Activated naive CD4-positive, alpha-beta T cell treated with anti-CD3 and anti-CD28 coated beads for 36 hours (primary cell): ENCODE measurements at regions of chr7 and their contacts with region 1.

Region 1: GRCh38 chr7:123557398-123558288 is at the start of gene NDUFA5:
- DNase-seq: peak; percentile 98
- H3K4me3 Mint-ChIP-seq: no peak within 1 kb of the TSS
- H3K27ac Mint-ChIP-seq: no peak within 1 kb of the TSS
- H3K4me1 Mint-ChIP-seq: peaks cover 18% of the 10 kb centered on the region
- H3K27me3 Mint-ChIP-seq: no peaks in the 10 kb centered on the region
- total RNA-seq, gene NDUFA5: 58.9 to 60.7 TPM

Region 2: DNA sequence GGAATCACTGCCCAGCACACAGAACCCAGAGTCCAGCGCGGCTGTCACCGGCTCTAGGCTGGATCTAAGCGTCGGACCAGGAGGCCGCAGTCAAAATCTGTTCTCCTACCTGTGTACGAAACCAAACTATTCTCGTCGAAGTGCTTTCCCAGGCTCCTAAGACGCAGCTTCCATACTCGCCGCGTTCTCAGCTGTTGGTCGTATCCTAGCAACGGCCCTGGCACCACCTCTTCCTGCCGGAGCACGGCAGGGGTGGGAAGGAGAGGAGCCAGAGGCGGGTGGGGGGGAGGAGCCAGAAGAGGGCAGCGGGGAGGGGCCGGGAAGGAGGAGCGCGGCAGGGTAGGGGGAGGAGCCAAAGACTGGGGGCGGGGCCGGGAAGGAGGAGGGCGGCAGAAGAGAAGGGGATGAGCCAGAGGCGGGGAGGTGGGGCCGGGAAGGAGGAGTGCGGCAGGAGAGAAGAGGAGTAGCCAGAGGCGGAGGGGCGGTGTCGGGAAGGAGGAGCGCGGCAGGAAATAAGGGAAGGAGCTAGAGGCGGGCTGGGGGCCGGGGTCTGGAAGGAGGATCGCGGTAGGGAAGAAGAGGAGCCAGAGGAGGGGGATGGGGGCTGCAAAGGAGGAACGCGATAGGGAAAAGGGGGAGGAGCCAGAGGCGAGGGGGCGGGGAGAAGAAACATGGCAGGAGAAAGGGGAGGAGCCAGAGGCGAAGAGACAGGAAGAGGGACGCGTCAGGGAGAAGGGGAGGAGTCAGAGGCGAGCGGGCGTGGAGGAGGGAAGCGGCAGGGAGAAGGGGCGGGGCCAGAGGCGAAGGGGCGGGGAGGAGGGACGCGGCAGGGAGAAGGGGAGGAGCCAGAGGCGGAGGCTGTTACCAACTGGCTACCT is 23.0 kb before region 1 on chr7 and contains the start of gene IQUB:
- CTCF ChIA-PET with region 1: interaction called, 3 read pairs
- intact Hi-C with region 1: loop called (anchors 1 kb)
- DNase-seq: peak; percentile 99
- H3K4me3 Mint-ChIP-seq: peak within 1 kb of the TSS; percentile 92
- H3K27ac Mint-ChIP-seq: peak within 1 kb of the TSS; percentile 82
- H3K4me1 Mint-ChIP-seq: peaks cover 27% of the 10 kb centered on the region
- H3K27me3 Mint-ChIP-seq: peaks cover 18% of the 10 kb centered on the region
- total RNA-seq, gene IQUB: 0.07 TPM in 1 of 2 experiments, not detected in the other

Region 3: GRCh38 chr7:123712619-123713018 is 155.0 kb after region 1 on chr7:
- CTCF ChIA-PET with region 1: interaction called, 3 read pairs
- intact Hi-C with region 1: loop called (anchors 5 kb)
- DNase-seq: no peak
- H3K4me3 Mint-ChIP-seq: no peak overlapping the region
- H3K27ac Mint-ChIP-seq: peak overlapping the region; percentile 14
- H3K4me1 Mint-ChIP-seq: peaks cover 52% of the 10 kb centered on the region
- H3K27me3 Mint-ChIP-seq: no peaks in the 10 kb centered on the region

Region 4: DNA sequence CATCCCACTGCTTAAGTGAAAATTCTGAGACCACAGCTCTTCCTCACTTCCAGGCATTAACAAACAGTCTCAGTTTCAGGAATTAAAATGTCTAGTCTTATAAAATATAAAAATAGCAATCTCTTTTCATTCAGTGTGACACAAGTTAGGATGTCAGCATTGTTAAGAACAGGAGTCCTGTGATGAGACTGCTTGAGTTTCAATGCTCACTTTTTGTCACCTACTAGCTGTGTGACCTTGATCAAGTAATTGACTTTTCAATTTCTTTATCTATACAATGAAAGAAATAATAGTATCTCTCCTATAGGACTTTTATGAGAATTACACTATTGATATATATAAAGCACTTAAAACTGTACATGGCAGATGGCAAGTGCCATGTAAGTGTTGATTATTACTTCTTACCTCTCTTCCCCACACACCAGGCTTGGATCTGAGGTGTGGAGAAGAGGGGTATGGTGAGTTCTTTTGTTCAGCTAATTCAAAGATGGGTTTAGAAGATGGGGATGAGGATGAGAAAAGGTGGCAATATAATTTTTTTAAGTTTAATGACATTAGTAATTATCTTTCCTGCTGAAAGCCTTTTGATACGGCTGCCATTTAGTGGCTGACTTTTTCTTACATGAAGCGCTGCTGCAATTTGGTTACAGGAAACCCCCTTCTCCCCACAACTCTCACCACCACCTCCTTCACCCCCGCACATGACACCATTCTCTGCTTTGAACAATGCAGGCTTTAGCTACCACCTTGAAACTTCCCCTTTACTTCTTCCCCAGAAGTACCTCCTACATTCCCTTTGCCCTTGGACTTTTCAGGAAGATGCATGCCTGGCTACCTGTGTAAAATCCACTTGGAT is 266.5 kb after region 1 on chr7:
- CTCF ChIA-PET with region 1: interaction called, 3 read pairs
- intact Hi-C with region 1: loop called (anchors 1 kb)
- DNase-seq: peak; percentile 85
- H3K4me3 Mint-ChIP-seq: no peak overlapping the region
- H3K27ac Mint-ChIP-seq: peak overlapping the region; percentile 76
- H3K4me1 Mint-ChIP-seq: peaks cover 21% of the 10 kb centered on the region
- H3K27me3 Mint-ChIP-seq: peaks cover 13% of the 10 kb centered on the region

Region 5: DNA sequence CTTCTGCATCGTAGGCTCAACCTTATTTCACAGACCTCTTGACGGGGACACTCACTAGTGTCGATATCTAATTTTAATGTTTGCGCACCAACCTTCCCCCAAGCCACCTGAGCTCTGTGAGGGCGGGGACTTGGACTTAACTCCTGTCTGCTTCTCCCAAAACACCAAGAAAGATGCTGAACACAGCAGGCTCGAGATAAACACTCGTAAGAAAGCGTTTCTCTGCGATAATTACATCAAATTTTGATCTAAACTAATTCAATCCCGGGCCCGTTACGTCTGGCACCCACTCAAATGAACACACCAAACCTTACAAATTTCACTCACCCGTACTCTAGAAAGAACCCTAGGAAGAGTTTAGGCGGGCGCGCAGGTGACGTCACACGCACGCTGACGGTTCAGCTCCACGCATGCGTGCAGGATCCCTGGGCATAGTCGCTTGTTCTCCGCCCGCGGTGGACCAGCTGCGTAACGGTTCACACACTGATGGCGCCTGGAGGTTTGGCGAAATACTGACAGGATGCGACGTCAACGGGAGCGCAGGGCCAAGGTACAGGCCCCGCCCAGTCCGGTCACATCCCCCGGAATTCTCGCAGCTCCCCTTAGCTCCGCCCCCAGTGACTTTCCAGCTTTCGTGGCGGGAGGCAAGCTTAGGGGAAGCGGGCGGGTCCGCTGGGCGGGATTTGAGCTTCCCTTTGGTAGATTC is 1372.0 kb after region 1 on chr7 and contains the start of gene POT1:
- CTCF ChIA-PET with region 1: no interaction called
- intact Hi-C with region 1: loop called (anchors 1 kb)
- DNase-seq: peak; percentile 98
- H3K4me3 Mint-ChIP-seq: peak within 1 kb of the TSS; percentile 97
- H3K27ac Mint-ChIP-seq: peak within 1 kb of the TSS; percentile 90
- H3K4me1 Mint-ChIP-seq: peaks cover 43% of the 10 kb centered on the region
- H3K27me3 Mint-ChIP-seq: no peaks in the 10 kb centered on the region
- total RNA-seq, gene POT1: 36.1 to 38.3 TPM